ENCODE measurements at regions of chr4 and their contacts with region 1.

Region 1: GRCh38 chr4:10879411-10880110 is 195.0 kb upstream of the CLNK start:
- DNase-seq: peak; percentile 3
- H3K4me3 ChIP-seq: no peak overlapping the region
- H3K27ac ChIP-seq: no peak overlapping the region
- H3K4me1 ChIP-seq: no peaks in the 10 kb centered on the region
- H3K27me3 ChIP-seq: no peaks in the 10 kb centered on the region
- CTCF ChIP-seq: no peak

Region 2: GRCh38 chr4:10951306-10951705 is 71.7 kb after region 1 on chr4:
- CTCF ChIA-PET with region 1: no interaction called
- dilution Hi-C with region 1: loop called (anchors 5 kb)
- in situ Hi-C with region 1: no loop called
- intact Hi-C with region 1: no loop called
- DNase-seq: peak; percentile 8
- H3K4me3 ChIP-seq: no peak overlapping the region
- H3K27ac ChIP-seq: no peak overlapping the region
- H3K4me1 ChIP-seq: peaks cover 5% of the 10 kb centered on the region
- H3K27me3 ChIP-seq: no peaks in the 10 kb centered on the region
- CTCF ChIP-seq: no peak

Region 3: DNA sequence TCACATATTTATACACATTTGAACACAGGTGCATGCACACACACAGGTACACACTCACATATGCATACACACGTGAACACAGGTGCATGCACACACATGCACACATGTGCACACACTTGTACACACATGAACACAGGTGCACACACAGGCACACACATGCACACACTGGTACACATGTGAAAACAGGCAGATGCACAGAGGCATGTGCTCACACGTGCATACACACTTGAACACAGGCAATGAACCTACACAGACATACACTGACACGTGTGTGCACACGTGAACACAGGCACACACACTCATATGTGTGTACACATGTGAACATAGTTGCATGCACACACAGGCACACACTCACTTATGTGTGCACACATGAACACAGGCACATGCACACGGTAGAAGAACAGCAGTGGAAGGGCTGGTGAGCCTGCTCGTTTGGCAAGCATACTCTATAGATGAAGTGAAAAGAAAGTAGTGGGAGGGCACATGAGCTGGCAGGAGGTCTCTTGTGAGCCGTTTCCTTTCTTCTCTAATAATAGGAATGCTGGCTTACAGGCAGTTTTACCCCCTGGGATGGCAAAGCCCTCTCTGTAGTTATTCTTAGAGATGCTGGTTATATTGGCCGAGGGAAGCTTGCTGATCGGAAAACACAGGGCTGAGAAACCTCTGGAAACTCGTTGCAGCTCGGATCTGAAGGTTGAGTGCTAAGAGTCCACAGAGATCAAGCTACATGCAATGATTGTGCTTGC is 84.6 kb after region 1 on chr4:
- CTCF ChIA-PET with region 1: no interaction called
- dilution Hi-C with region 1: no loop called
- in situ Hi-C with region 1: no loop called
- intact Hi-C with region 1: no loop called
- DNase-seq: no peak
- H3K4me3 ChIP-seq: no peak overlapping the region
- H3K27ac ChIP-seq: no peak overlapping the region
- H3K4me1 ChIP-seq: no peaks in the 10 kb centered on the region
- H3K27me3 ChIP-seq: no peaks in the 10 kb centered on the region
- CTCF ChIP-seq: no peak

Measured in mammary epithelial cell (primary cell).